CD14-positive monocyte (primary cell): ENCODE measurements at regions of chr12 and their contacts with region 1.

Region 1: GRCh38 chr12:120592121-120593049 is 11.2 kb upstream of the POP5 start:
- DNase-seq: peak in 1 of 3 donors; percentile 26
- H3K4me3 ChIP-seq: no peak overlapping the region
- H3K4me3 Mint-ChIP-seq: no peak overlapping the region
- H3K27ac ChIP-seq: no peak overlapping the region
- H3K27ac Mint-ChIP-seq: peak overlapping the region in 1 of 7 donors; percentile 11
- H3K4me1 ChIP-seq: peaks cover 4 to 9% of the 10 kb centered on the region in 2 donors
- H3K4me1 Mint-ChIP-seq: peaks cover 9% of the 10 kb centered on the region
- H3K27me3 ChIP-seq: no peaks in the 10 kb centered on the region
- H3K27me3 Mint-ChIP-seq: peaks cover 4 to 5% (median 4%) of the 10 kb centered on the region in 3 donors
- CTCF ChIP-seq: no peak

Region 2: DNA sequence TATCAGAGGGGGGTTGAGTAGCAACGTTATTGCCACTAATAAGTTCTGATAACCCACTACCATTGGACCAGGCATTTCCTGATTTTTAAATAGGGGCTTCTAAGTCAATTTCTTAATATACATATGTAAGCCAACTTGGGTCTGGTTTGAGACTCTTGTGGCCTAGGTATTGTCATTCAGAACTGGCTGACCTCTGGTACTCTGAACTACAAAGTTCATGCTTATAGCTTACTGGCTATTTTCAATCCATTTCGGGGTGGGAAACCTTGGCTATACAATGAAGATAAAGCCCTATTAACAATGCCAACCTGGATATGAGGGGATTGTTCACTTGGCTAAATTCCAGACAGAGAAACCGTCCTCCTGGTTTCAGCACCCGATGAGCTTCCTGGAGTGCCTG is 87.8 kb before region 1 on chr12:
- intact Hi-C with region 1: no loop called
- DNase-seq: no peak
- H3K4me3 ChIP-seq: no peak overlapping the region
- H3K4me3 Mint-ChIP-seq: no peak overlapping the region
- H3K27ac ChIP-seq: no peak overlapping the region
- H3K27ac Mint-ChIP-seq: peak overlapping the region in 1 of 7 donors; percentile 30
- H3K4me1 ChIP-seq: no peaks in the 10 kb centered on the region
- H3K4me1 Mint-ChIP-seq: no peaks in the 10 kb centered on the region
- H3K27me3 ChIP-seq: no peaks in the 10 kb centered on the region
- H3K27me3 Mint-ChIP-seq: no peaks in the 10 kb centered on the region
- CTCF ChIP-seq: no peak

Region 3: GRCh38 chr12:120618954-120619615 is 26.7 kb after region 1 on chr12:
- intact Hi-C with region 1: loop called in 1 of 2 experiments (anchors 2 kb)
- DNase-seq: no peak
- H3K4me3 ChIP-seq: no peak overlapping the region
- H3K4me3 Mint-ChIP-seq: no peak overlapping the region
- H3K27ac ChIP-seq: no peak overlapping the region
- H3K27ac Mint-ChIP-seq: no peak overlapping the region
- H3K4me1 ChIP-seq: no peaks in the 10 kb centered on the region
- H3K4me1 Mint-ChIP-seq: no peaks in the 10 kb centered on the region
- H3K27me3 ChIP-seq: peaks cover 3 to 8% of the 10 kb centered on the region in 2 donors
- H3K27me3 Mint-ChIP-seq: peaks cover 9 to 31% (median 10%) of the 10 kb centered on the region in 3 donors
- CTCF ChIP-seq: no peak